ENCODE measurements at regions of chr6 and their contacts with region 1.

Region 1: GRCh38 chr6:18323935-18324705 is 59.8 kb upstream of the DEK start:
- DNase-seq: no peak
- H3K4me3 Mint-ChIP-seq: no peak overlapping the region
- H3K27ac Mint-ChIP-seq: no peak overlapping the region
- H3K4me1 Mint-ChIP-seq: peaks cover 6% of the 10 kb centered on the region
- H3K27me3 Mint-ChIP-seq: peaks cover 5% of the 10 kb centered on the region

Region 2: GRCh38 chr6:18359237-18359885 is 35.2 kb after region 1 on chr6:
- intact Hi-C with region 1: no loop called
- DNase-seq: no peak
- H3K4me3 Mint-ChIP-seq: no peak overlapping the region
- H3K27ac Mint-ChIP-seq: no peak overlapping the region
- H3K4me1 Mint-ChIP-seq: no peaks in the 10 kb centered on the region
- H3K27me3 Mint-ChIP-seq: peaks cover 12% of the 10 kb centered on the region

Region 3: GRCh38 chr6:18503593-18504231 is 179.6 kb after region 1 on chr6:
- intact Hi-C with region 1: loop called (anchors 1 kb)
- DNase-seq: no peak
- H3K4me3 Mint-ChIP-seq: no peak overlapping the region
- H3K27ac Mint-ChIP-seq: no peak overlapping the region
- H3K4me1 Mint-ChIP-seq: no peaks in the 10 kb centered on the region
- H3K27me3 Mint-ChIP-seq: peaks cover 6% of the 10 kb centered on the region

Region 4: GRCh38 chr6:18595774-18596530 is 271.8 kb after region 1 on chr6:
- intact Hi-C with region 1: loop called (anchors 10 kb)
- DNase-seq: peak; percentile 13
- H3K4me3 Mint-ChIP-seq: no peak overlapping the region
- H3K27ac Mint-ChIP-seq: no peak overlapping the region
- H3K4me1 Mint-ChIP-seq: no peaks in the 10 kb centered on the region
- H3K27me3 Mint-ChIP-seq: peaks cover 1% of the 10 kb centered on the region

Region 5: DNA sequence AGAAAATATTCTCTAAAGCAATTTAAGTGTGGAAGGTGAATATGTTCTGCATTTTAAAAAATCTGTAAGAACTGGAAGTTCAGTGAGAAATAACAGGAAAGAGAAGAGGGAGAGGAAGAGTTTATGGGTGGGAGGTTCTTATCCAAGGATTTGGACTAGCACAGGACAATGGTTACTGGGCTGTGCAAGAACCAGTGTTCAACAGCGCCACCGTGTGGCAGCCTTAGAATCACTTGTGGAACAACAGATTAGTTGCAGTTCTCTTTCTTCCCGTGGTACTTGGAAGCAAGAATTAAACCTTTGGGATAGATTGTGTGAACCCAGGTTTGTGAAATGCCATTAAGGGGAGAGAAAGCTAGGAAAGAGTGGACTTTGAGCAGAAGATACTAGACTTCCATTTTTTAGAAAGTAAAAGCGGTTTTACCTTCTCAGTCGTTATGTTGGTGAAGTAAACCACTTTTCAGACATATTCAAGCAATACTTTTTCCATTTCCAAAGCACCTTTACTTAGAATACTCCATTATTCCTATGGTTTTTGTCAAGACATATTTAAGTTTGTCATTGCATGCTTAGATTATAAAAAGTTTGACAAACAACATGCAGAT is 499.8 kb after region 1 on chr6:
- intact Hi-C with region 1: loop called (anchors 10 kb)
- DNase-seq: no peak
- H3K4me3 Mint-ChIP-seq: no peak overlapping the region
- H3K27ac Mint-ChIP-seq: no peak overlapping the region
- H3K4me1 Mint-ChIP-seq: no peaks in the 10 kb centered on the region
- H3K27me3 Mint-ChIP-seq: no peaks in the 10 kb centered on the region

Measured in activated T-helper 1 cell treated with anti-CD3 and anti-CD28 coated beads, Interleukin-12 subunit alpha, Interleukin-12 subunit beta, Interleukin-2, Interleukin-4 antibody, amounts not matched to agents 30 ng/mL and 10 ng/mL and 1 ng/mL, durations not matched to agents 14 hours and 24 hours and 36 hours (primary cell).